Ascending aorta (tissue), 2 donors: ENCODE measurements at regions of chr2 and their contacts with region 1.

Region 1: DNA sequence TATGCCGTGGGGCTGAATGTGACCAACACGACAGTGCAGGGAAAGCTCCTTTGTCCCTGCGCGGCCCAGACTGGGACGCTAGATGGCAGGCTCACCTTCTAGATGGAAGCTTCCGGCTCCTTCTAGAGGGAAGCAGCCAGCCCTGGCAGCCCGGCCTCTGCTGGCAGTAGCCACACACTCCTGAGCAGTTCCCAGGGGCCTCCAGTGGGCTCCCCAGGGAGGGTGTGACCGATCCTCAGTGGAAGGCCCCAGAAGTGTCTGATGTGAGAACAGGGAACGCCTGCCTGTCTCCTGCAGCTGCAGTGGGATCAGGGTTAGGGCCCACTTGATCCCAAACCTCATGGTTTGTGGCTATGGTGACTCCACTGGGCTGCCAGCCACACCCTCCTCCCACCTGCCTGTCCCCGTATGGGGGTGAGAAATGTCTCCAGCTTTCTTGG is 48.5 kb upstream of the LRPPRC start:
- DNase-seq: peak; percentile 22 to 90
- H3K4me3 ChIP-seq: no peak overlapping the region
- H3K27ac ChIP-seq: no peak overlapping the region
- H3K4me1 ChIP-seq: no peaks in the 10 kb centered on the region
- H3K27me3 ChIP-seq: no peaks in the 10 kb centered on the region
- CTCF ChIP-seq: peak; percentile 80 to 87 (median 81)

Region 2: DNA sequence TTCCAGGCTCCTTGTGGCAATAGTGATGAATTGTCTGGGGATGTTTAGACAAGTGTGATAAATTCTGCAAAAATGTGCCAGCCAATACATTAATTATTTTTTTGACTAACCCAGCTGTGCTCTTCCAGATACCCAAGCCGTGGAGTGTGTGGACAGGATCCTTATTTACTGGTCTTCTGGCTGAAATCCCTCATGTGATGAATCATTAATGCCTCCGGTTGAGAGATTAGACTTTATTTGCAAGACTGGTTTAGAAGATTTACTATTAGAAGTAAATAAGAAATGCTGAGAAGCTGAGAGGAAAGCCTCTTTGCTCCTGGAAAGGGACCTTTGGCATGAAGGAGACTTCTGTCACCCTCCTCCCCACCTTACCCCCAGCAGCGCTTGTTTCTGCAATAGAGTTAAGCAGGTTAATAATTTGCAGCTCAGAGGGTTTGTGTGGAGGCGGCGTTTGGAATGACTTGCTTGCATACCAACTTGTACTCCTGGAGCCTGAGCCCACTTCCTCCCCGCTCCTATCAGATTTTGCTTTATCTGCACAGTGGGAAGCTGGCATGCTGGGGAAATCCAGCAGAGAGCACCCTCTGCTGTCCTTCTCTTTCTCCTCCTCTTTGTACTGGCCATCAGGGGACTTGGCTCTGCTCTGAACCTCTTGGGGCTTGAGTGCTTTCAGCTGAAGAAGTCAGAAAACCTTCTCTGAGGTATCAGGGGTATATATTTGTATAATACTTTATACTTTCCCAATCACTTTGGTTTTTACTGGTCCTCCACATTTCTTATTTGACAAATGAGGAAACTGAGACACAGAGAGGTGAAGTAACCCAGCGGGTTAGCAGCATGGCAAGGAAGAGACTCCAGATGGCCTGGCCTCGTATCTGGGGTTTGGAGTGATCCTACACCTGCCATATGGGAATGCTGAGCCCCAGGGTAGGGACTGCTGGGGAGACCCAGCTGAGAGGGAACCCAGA is 247.3 kb after region 1 on chr2:
- intact Hi-C with region 1: loop called (anchors 2 kb)
- DNase-seq: peak in 1 of 2 donors; percentile 78
- H3K4me3 ChIP-seq: peak overlapping the region in 1 of 2 donors; percentile 16
- H3K27ac ChIP-seq: peak overlapping the region; percentile 19 to 61
- H3K4me1 ChIP-seq: peaks cover 0 to 34% of the 10 kb centered on the region in 2 donors
- H3K27me3 ChIP-seq: no peaks in the 10 kb centered on the region
- CTCF ChIP-seq: peak; percentile 46 to 70 (median 50)

Region 3: GRCh38 chr2:44479122-44479887 is 435.0 kb after region 1 on chr2:
- intact Hi-C with region 1: loop called (anchors 5 kb)
- DNase-seq: peak in 1 of 2 donors; percentile 64
- H3K4me3 ChIP-seq: no peak overlapping the region
- H3K27ac ChIP-seq: no peak overlapping the region
- H3K4me1 ChIP-seq: no peaks in the 10 kb centered on the region
- H3K27me3 ChIP-seq: no peaks in the 10 kb centered on the region
- CTCF ChIP-seq: peak; percentile 93 to 98 (median 97)

Region 4: GRCh38 chr2:44955593-44956392 is 911.5 kb after region 1 on chr2:
- intact Hi-C with region 1: loop called (anchors 1 kb)
- DNase-seq: no peak
- H3K4me3 ChIP-seq: peak overlapping the region; percentile 33 to 60
- H3K27ac ChIP-seq: no peak overlapping the region
- H3K4me1 ChIP-seq: peaks cover 13 to 23% of the 10 kb centered on the region in 2 donors
- H3K27me3 ChIP-seq: peaks cover 14% of the 10 kb centered on the region
- CTCF ChIP-seq: peak; percentile 81 to 88 (median 83)